IMR-90 (cell line): ENCODE measurements at regions of chrX and their contacts with region 1.

Region 1: GRCh38 chrX:107654872-107655761 is 26.8 kb downstream of the PRPS1 start:
- DNase-seq: peak; percentile 92
- ATAC-seq: peak; percentile 90
- H3K4me3 ChIP-seq: no peak overlapping the region
- H3K27ac ChIP-seq: no peak overlapping the region; the same call in 1 of the 2 replicates
- H3K4me1 ChIP-seq: no peaks in the 10 kb centered on the region
- H3K27me3 ChIP-seq: peaks cover 2% of the 10 kb centered on the region
- CTCF ChIP-seq: peak; percentile 54
- POLR2A ChIP-seq: no peak
- RAD21 ChIP-seq: peak; percentile 22; the same call in 1 of the 2 replicates

Region 2: GRCh38 chrX:107537815-107538214 is 117.3 kb before region 1 on chrX:
- CTCF ChIA-PET with region 1: interaction called, 3 read pairs
- POLR2A ChIA-PET with region 1: no interaction called
- dilution Hi-C with region 1: no loop called
- in situ Hi-C with region 1: no loop called
- intact Hi-C with region 1: loop called (anchors 1 kb)
- DNase-seq: peak; percentile 50
- ATAC-seq: peak; percentile 63
- H3K4me3 ChIP-seq: no peak overlapping the region
- H3K27ac ChIP-seq: no peak overlapping the region
- H3K4me1 ChIP-seq: no peaks in the 10 kb centered on the region
- H3K27me3 ChIP-seq: peaks cover 7% of the 10 kb centered on the region
- CTCF ChIP-seq: peak; percentile 59
- POLR2A ChIP-seq: no peak
- RAD21 ChIP-seq: peak; percentile 76

Region 3: DNA sequence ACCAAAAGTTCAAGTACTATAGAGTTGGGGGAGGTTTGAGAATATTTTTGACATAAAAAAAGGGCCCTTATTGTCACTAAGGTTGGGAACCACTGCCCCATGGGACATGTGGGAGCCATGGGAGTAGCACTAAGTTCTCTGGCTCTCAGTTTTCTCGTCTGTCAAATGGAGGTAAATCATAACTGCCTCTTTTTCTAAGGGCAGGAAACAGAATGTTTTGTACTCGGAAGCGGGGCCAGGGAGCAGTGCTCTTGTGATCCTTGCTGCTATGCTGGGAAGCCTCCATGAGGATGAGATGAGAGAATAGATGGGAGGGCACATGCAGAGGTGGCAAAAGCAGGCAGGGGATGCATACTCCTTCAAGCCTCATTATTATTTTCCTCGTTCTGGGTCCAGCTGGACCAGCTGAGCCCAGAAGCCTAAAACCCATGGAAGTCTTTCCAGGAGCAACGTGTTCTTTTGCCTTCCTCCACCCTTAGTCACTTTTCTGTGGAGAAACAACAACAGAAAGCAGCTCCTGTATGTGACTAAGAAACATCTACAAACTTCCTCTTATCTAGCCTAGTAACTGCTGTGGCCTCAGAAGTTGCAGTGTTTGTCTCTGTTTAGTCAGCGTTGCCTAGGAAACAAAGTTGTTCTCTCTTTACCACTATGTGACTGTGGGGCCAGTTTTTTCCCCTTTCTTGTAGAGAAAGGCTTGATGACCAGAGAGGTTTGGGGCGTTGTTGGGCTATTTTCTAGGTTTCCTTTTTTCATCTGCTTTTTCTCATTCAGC is 55.7 kb after region 1 on chrX:
- CTCF ChIA-PET with region 1: interaction called, 7 read pairs
- POLR2A ChIA-PET with region 1: interaction called, 4 read pairs
- dilution Hi-C with region 1: no loop called
- in situ Hi-C with region 1: no loop called
- intact Hi-C with region 1: loop called (anchors 2 kb)
- DNase-seq: peak; percentile 93
- ATAC-seq: peak; percentile 75
- H3K4me3 ChIP-seq: no peak overlapping the region
- H3K27ac ChIP-seq: peak overlapping the region; percentile 60; the same call in 1 of the 2 replicates
- H3K4me1 ChIP-seq: peaks cover 10% of the 10 kb centered on the region; the same call in 1 of the 2 replicates
- H3K27me3 ChIP-seq: peaks cover 6% of the 10 kb centered on the region
- CTCF ChIP-seq: no peak
- POLR2A ChIP-seq: no peak
- RAD21 ChIP-seq: no peak

Region 4: GRCh38 chrX:107716816-107717700 is 61.9 kb after region 1 on chrX:
- CTCF ChIA-PET with region 1: interaction called, 7 read pairs
- POLR2A ChIA-PET with region 1: interaction called, 4 read pairs
- dilution Hi-C with region 1: no loop called
- in situ Hi-C with region 1: no loop called
- intact Hi-C with region 1: loop called (anchors 1 kb)
- DNase-seq: peak; percentile 63
- ATAC-seq: peak; percentile 58
- H3K4me3 ChIP-seq: peak overlapping the region; percentile 43
- H3K27ac ChIP-seq: peak overlapping the region; percentile 72
- H3K4me1 ChIP-seq: peaks cover 6% of the 10 kb centered on the region; the same call in 1 of the 2 replicates
- H3K27me3 ChIP-seq: peaks cover 16% of the 10 kb centered on the region
- CTCF ChIP-seq: no peak
- POLR2A ChIP-seq: peak; percentile 95
- RAD21 ChIP-seq: 0 out of 2 replicates have a peak, but pooled peaks have one; percentile 10

Region 5: DNA sequence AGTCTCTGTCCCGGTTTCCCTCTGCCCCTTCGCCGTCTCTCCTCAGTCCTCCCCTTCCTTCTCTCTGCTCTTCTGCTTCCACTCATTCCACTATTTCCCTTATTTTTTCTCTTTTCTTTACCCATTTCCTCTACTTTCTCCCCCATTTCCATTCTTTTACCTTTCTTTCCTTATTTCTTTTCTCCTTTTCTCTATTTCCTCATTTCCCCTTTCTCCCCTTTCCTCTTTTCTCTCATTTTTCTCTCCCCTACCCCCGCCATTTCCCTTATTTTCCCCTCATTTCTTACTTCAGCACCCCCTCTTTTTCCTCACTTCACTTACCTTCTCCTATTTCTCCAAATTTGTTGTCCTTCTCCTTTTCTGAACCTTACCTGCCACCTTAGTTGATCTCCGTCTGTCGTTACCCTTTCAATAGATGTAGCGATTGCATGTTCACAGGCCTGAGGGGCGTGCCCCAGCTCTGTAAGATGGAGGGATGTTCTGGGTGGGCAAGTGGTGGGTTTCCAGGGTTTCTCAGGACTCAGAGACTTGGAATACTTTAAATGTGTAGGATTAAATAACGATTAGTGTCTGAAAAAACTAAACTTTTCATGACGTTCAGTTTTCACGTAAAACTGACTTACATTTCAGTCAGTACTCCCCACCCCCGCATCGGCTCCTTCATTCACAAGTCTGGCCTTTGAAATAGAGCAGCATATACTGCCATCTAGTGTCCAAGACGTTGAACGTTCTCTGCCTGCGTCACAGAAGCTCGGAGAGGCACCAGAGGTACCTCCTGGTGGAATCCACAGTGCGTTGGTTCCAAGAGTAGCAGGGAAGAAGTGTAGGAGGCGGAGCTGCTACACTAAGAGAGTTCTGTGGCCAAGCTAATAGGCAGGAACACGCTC is 121.8 kb after region 1 on chrX:
- CTCF ChIA-PET with region 1: interaction called, 8 read pairs
- POLR2A ChIA-PET with region 1: no interaction called
- dilution Hi-C with region 1: no loop called
- in situ Hi-C with region 1: loop called (anchors 5 kb)
- intact Hi-C with region 1: loop called (anchors 1 kb)
- DNase-seq: peak; percentile 87
- ATAC-seq: peak; percentile 88
- H3K4me3 ChIP-seq: peak overlapping the region; percentile 14; the same call in 1 of the 2 replicates
- H3K27ac ChIP-seq: no peak overlapping the region
- H3K4me1 ChIP-seq: no peaks in the 10 kb centered on the region
- H3K27me3 ChIP-seq: peaks cover 31% of the 10 kb centered on the region
- CTCF ChIP-seq: peak; percentile 80
- POLR2A ChIP-seq: no peak
- RAD21 ChIP-seq: peak; percentile 82

Region 6: DNA sequence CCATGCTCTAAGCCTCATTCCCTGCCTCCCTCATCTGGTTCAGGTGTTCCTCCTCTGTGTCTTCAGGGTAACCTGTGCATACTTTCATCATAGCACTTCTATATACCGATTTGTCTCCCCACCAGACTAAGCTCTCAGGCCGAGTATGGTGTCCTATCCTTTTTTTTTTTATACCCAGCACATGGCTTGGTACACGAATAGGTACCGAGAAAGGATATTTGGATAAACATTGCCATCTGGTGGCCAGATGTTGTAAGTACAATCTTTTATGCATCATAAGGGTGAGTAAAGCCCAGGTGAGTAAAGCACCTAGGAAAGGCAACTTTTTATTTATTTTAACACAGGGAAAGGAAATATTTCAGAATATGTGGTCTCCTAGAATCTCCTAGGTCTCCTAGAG is 238.9 kb after region 1 on chrX:
- CTCF ChIA-PET with region 1: no interaction called
- POLR2A ChIA-PET with region 1: no interaction called
- dilution Hi-C with region 1: no loop called
- in situ Hi-C with region 1: no loop called
- intact Hi-C with region 1: loop called (anchors 2 kb)
- DNase-seq: peak; percentile 42
- ATAC-seq: 0 out of 2 replicates have a peak, but pooled peaks have one; percentile 37
- H3K4me3 ChIP-seq: no peak overlapping the region
- H3K27ac ChIP-seq: no peak overlapping the region
- H3K4me1 ChIP-seq: no peaks in the 10 kb centered on the region
- H3K27me3 ChIP-seq: peaks cover 5% of the 10 kb centered on the region
- CTCF ChIP-seq: peak; percentile 54
- POLR2A ChIP-seq: no peak
- RAD21 ChIP-seq: peak; percentile 65

Region 7: GRCh38 chrX:108070891-108071290 is 415.8 kb after region 1 on chrX:
- CTCF ChIA-PET with region 1: no interaction called
- POLR2A ChIA-PET with region 1: no interaction called
- dilution Hi-C with region 1: no loop called
- in situ Hi-C with region 1: loop called (anchors 10 kb)
- intact Hi-C with region 1: no loop called
- DNase-seq: peak; percentile 88
- ATAC-seq: peak; percentile 82
- H3K4me3 ChIP-seq: no peak overlapping the region
- H3K27ac ChIP-seq: no peak overlapping the region
- H3K4me1 ChIP-seq: peaks cover 2% of the 10 kb centered on the region
- H3K27me3 ChIP-seq: peaks cover 36% of the 10 kb centered on the region
- CTCF ChIP-seq: no peak
- POLR2A ChIP-seq: no peak
- RAD21 ChIP-seq: no peak